Activated CD4-positive, alpha-beta T cell treated with anti-CD3 and anti-CD28 coated beads, Interleukin-2, amount 10 ng/mL, durations not matched to agents 7 days and 5 days (primary cell): ENCODE measurements at regions of chr1 and their contacts with region 1.

Region 1: DNA sequence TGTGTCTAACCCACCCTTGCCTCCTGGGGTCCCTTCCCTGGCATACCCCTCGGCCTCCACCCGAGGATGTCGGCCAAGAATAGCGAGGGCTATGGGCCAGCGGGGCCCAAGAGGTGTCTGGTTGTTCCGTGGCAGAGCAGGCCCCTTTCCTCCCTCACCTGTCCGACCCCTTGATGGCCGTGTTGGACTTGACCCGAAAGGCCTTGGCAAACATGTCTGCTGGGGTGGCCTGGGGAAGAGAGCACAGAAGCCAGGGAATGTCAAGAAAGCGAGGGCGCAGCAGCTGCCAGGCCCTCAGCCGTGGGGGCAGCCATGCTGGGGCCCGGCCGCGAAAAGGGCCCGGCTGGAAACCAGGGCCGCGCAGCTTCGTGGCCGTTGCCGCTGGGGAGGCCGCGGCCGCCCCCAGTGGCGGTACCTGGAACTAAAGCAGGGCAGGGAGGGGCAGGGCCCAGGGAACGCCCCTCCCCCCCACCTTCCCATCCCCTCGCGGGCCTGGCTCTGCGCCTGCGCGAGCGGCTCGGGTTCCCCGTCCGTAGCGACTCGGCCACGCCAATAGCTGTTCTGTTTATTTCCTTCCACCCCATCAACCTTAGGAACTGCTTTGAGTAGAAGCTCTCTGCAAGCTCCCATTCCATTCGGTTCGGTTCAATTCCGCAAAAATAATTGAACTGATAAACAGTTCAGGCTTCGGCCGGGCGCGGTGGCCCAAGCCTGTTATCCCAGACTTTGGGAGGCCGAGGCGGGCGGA is at the start of gene EIF2D:
- DNase-seq: peak; percentile 93
- H3K4me3 Mint-ChIP-seq: peak within 1 kb of the TSS; percentile 93
- H3K27ac Mint-ChIP-seq: peak within 1 kb of the TSS; percentile 89
- H3K4me1 Mint-ChIP-seq: peaks cover 33% of the 10 kb centered on the region
- H3K27me3 Mint-ChIP-seq: peaks cover 7% of the 10 kb centered on the region
- total RNA-seq, gene EIF2D: 44.5 to 51.6 TPM

Region 2: DNA sequence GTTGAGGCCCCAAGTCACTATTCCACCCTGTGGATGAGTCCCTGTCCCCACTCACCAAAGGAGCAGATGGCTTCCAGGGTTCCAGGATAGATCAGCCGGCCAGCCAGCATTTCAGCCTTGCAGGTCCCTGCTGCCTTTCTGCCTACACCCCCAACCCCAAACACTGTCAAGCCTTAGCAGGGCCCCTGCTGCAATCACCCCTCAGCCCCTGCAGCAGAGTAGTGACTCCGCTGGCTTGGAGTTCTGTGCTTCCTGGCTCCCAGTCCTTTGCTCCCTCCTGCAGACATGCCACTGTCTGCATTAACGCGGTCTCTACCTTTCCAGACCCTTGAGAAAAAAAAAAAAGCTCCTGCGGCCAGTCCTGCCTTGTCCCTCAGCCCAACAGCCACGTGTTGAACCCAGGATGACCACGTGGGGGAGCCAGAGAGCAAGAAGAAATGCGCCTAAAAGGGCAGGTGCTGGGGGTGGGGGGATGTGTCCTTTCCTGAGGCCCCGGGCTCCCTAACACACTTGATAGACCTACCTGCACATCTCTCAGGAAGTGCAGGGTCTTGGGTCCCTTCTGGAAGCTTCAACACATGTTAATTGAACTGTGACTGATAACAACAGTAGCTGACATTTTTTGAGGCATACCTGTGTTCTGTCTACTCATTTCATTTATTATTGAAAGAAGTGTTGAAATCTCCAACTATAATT is 67.6 kb before region 1 on chr1:
- CTCF ChIA-PET with region 1: interaction called, 11 read pairs
- POLR2A ChIA-PET with region 1: no interaction called
- DNase-seq: peak; percentile 85
- H3K4me3 Mint-ChIP-seq: no peak overlapping the region
- H3K27ac Mint-ChIP-seq: peak overlapping the region; percentile 60
- H3K4me1 Mint-ChIP-seq: peaks cover 25% of the 10 kb centered on the region
- H3K27me3 Mint-ChIP-seq: no peaks in the 10 kb centered on the region

Region 3: DNA sequence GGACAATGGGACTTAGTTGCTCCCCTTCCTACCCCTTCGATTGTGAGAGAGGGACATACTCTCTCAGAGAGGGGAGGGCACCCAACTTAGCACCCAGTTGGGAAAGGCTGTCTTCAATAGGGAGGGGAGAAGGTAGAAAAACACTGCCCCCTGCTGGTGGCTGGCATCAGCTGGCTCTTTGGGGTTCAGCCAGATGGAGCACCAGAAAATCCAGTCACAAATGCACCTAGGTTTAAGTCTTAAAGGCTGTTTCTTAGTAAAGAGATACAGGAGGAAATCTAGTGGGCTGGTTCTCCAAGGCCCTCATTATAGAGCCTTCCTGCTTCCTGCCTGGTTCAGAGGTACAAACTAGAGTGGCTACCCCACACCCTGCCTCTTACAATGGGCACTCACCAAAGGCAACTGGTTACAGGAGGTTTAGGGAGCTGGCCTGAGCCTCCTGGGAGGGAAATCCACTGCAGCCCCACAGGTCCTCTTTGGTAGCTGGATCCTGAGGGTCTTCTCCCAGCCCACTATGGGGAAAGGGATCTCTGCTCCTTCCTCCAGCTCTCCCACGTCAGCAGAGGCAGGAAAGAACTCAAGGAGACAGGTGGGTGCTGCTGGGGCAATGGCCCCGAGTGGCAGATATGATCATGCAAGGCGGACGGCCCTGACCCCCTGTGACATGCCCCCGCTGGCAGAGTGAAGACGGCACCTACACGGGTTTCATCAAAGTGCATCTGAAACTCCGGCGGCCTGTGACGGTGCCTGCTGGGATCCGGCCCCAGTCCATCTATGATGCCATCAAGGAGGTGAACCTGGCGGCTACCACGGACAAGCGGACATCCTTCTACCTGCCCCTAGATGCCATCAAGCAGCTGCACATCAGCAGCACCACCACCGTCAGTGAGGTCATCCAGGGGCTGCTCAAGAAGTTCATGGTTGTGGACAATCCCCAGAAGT is 28.3 kb before region 1 on chr1:
- CTCF ChIA-PET with region 1: interaction called, 22 read pairs
- POLR2A ChIA-PET with region 1: no interaction called
- DNase-seq: peak; percentile 89
- H3K4me3 Mint-ChIP-seq: peak overlapping the region; percentile 49
- H3K27ac Mint-ChIP-seq: peak overlapping the region; percentile 91
- H3K4me1 Mint-ChIP-seq: peaks cover 93% of the 10 kb centered on the region
- H3K27me3 Mint-ChIP-seq: no peaks in the 10 kb centered on the region

Region 4: GRCh38 chr1:206600527-206600926 is 11.8 kb before region 1 on chr1:
- CTCF ChIA-PET with region 1: interaction called, 38 read pairs
- POLR2A ChIA-PET with region 1: no interaction called
- DNase-seq: no peak
- H3K4me3 Mint-ChIP-seq: no peak overlapping the region
- H3K27ac Mint-ChIP-seq: no peak overlapping the region
- H3K4me1 Mint-ChIP-seq: no peaks in the 10 kb centered on the region
- H3K27me3 Mint-ChIP-seq: no peaks in the 10 kb centered on the region

Region 5: GRCh38 chr1:206635080-206635977 is 23.0 kb after region 1 on chr1 and contains the start of gene DYRK3:
- CTCF ChIA-PET with region 1: interaction called, 39 read pairs
- POLR2A ChIA-PET with region 1: no interaction called
- DNase-seq: peak; percentile 93
- H3K4me3 Mint-ChIP-seq: peak within 1 kb of the TSS; percentile 75
- H3K27ac Mint-ChIP-seq: peak within 1 kb of the TSS; percentile 89
- H3K4me1 Mint-ChIP-seq: peaks cover 23% of the 10 kb centered on the region
- H3K27me3 Mint-ChIP-seq: peaks cover 11% of the 10 kb centered on the region
- total RNA-seq, gene DYRK3: 4.0 to 4.3 TPM

Region 6: GRCh38 chr1:206663832-206664652 is 51.7 kb after region 1 on chr1:
- CTCF ChIA-PET with region 1: interaction called, 25 read pairs
- POLR2A ChIA-PET with region 1: no interaction called
- DNase-seq: peak; percentile 78
- H3K4me3 Mint-ChIP-seq: no peak overlapping the region
- H3K27ac Mint-ChIP-seq: no peak overlapping the region
- H3K4me1 Mint-ChIP-seq: peaks cover 21% of the 10 kb centered on the region
- H3K27me3 Mint-ChIP-seq: peaks cover 26% of the 10 kb centered on the region

Region 7: GRCh38 chr1:206723812-206724472 is 111.6 kb after region 1 on chr1:
- CTCF ChIA-PET with region 1: no interaction called
- POLR2A ChIA-PET with region 1: no interaction called
- DNase-seq: no peak
- H3K4me3 Mint-ChIP-seq: no peak overlapping the region
- H3K27ac Mint-ChIP-seq: no peak overlapping the region
- H3K4me1 Mint-ChIP-seq: peaks cover 47% of the 10 kb centered on the region
- H3K27me3 Mint-ChIP-seq: no peaks in the 10 kb centered on the region

Region 8: DNA sequence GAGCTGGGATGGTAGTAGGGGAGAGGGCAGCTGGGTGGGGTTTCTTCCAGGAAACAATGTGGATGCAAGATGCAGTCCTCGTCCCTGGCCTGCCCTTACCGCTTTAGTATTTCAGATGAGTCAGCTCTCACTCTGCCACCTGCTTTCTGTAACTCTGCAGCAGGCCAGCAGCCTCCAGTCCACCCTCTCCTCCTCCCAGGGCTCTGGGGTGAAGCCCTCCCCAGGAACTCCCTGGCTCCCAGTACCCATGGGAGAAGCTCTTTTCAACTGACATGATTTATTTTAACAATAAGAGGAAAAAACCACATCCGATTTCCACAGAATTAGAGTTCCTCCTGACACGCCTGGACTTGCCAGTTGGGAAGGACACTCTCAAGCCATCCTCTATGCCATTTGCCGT is 214.1 kb after region 1 on chr1:
- CTCF ChIA-PET with region 1: no interaction called
- POLR2A ChIA-PET with region 1: no interaction called
- DNase-seq: no peak
- H3K4me3 Mint-ChIP-seq: no peak overlapping the region
- H3K27ac Mint-ChIP-seq: no peak overlapping the region
- H3K4me1 Mint-ChIP-seq: peaks cover 48% of the 10 kb centered on the region
- H3K27me3 Mint-ChIP-seq: no peaks in the 10 kb centered on the region